HEK293 (cell line): ENCODE measurements at regions of chr15 and their contacts with region 1.

Region 1: DNA sequence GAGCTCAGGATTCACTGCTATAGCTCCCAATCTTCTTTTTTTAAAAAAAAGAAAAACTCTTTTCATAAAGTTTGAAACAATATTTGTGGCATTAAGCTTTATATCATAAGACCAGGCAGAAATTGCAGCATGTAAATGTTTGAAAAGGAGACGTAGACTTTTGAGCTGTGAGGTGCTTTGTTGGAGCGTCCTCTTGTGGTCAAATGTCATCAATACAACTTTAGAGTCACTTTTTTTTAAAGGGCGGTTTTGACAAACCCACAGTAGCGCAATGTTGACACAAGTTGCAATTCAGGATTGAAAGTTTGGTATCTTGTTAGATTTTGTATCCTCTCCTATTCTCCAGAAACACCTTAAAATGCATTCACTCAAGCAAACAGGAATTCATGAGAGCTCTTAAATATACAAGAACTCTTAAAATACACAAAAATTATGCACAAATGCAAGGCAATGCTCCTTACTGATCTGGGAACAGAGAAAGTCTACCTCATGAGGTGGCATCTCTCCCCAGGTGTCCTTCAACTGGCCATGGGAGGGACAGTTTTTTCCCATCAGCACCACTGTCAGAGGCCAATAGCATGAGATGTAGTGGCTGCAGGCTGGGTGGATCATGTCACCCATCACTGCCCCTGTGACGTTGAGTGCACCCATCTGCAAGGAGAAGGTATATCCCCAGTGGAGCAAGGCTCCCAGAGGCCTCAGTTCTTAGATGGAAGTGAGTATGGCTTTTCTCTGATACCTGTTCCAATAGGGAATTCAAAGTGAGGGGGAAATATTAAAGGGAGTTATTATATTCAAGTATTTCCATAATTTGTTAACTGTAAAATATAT is 70.7 kb downstream of the ANXA2 start:
- H3K4me3 ChIP-seq: no peak overlapping the region
- H3K27ac ChIP-seq: no peak overlapping the region
- H3K4me1 ChIP-seq: 0 out of 2 replicates have a peak, but pooled peaks cover 6% of the 10 kb centered on the region
- CTCF ChIP-seq: 0 out of 2 replicates have a peak, but pooled peaks have one; percentile 33

Region 2: GRCh38 chr15:59528965-59529402 is 798.1 kb before region 1 on chr15:
- CTCF ChIA-PET with region 1: interaction called, 10 read pairs
- POLR2A ChIA-PET with region 1: no interaction called
- H3K4me3 ChIP-seq: no peak overlapping the region
- H3K27ac ChIP-seq: no peak overlapping the region
- H3K4me1 ChIP-seq: no peaks in the 10 kb centered on the region
- CTCF ChIP-seq: peak; percentile 68

Region 3: GRCh38 chr15:59725172-59725486 is 601.9 kb before region 1 on chr15:
- CTCF ChIA-PET with region 1: interaction called, 60 read pairs
- POLR2A ChIA-PET with region 1: no interaction called
- H3K4me3 ChIP-seq: no peak overlapping the region
- H3K27ac ChIP-seq: no peak overlapping the region
- H3K4me1 ChIP-seq: no peaks in the 10 kb centered on the region
- CTCF ChIP-seq: no peak

Region 4: DNA sequence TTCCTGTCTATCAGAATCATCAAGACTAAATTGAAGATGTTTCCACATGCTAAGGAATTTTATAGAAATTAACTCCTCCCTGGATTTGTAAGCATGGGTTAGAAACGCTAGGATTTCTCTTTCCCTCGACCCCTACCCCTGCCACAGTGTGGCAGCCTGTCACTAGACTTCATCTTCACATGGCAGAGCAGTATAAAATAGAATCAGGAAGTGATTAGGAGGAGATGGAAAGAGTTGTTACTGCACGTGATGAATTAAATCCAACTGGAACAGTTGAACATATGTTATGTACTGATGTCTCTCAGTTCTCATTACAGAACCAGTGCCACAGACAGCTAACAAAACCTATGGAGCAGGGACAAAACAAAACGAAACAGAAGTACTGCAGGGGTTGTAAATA is 507.9 kb before region 1 on chr15:
- CTCF ChIA-PET with region 1: interaction called, 13 read pairs
- POLR2A ChIA-PET with region 1: no interaction called
- H3K4me3 ChIP-seq: no peak overlapping the region
- H3K27ac ChIP-seq: no peak overlapping the region
- H3K4me1 ChIP-seq: peaks cover 10% of the 10 kb centered on the region; the same call in 1 of the 2 replicates
- CTCF ChIP-seq: peak; percentile 56; the same call in 1 of the 2 replicates

Region 5: DNA sequence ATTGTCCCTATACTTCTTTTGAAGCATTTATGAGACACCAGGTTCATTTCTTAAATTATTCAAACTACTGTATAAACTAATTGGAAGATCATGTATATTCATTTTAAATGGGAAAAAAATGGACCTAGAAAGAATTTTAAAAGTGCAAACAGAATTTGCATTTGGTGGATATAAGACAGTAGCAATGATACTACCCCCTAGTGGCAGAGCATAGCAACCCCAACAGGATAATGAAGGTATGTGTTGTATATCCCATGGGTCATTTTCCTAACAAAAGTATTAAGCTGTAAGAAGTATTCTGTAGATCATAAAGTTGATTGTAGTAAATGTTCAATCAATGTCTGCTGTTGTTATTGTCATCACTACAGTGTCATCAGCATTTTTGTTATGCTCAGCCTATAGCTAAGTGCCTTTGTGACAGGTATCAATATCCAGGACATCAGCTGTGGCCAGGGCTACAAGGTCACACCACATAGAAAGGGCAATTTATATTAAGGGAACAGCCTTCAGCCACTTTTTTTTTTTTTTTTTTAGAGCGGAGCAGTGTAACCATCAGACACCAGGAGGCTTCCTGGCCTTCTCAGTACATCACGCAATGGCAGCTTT is 147.2 kb before region 1 on chr15:
- CTCF ChIA-PET with region 1: interaction called, 10 read pairs
- POLR2A ChIA-PET with region 1: no interaction called
- H3K4me3 ChIP-seq: no peak overlapping the region
- H3K27ac ChIP-seq: no peak overlapping the region
- H3K4me1 ChIP-seq: no peaks in the 10 kb centered on the region
- CTCF ChIP-seq: no peak

Region 6: GRCh38 chr15:60520825-60521368 is 193.9 kb after region 1 on chr15:
- CTCF ChIA-PET with region 1: interaction called, 29 read pairs
- POLR2A ChIA-PET with region 1: no interaction called
- H3K4me3 ChIP-seq: no peak overlapping the region
- H3K27ac ChIP-seq: no peak overlapping the region
- H3K4me1 ChIP-seq: peaks cover 3% of the 10 kb centered on the region; the same call in 1 of the 2 replicates
- CTCF ChIP-seq: peak; percentile 43; the same call in 1 of the 2 replicates